CD8-positive, alpha-beta T cell (primary cell): ENCODE measurements at regions of chr1 and their contacts with region 1.

Region 1: GRCh38 chr1:36385410-36386257 is at the start of gene STK40:
- DNase-seq: peak; percentile 97 to 99 (median 98)
- ATAC-seq: peak; percentile 85
- H3K4me3 ChIP-seq: peak within 1 kb of the TSS; percentile 87 to 89
- H3K4me3 Mint-ChIP-seq: peak within 1 kb of the TSS; percentile 88
- H3K27ac ChIP-seq: peak within 1 kb of the TSS; percentile 78 to 92
- H3K27ac Mint-ChIP-seq: peak within 1 kb of the TSS; percentile 98
- H3K4me1 ChIP-seq: peaks cover 27% of the 10 kb centered on the region
- H3K4me1 Mint-ChIP-seq: peaks cover 46% of the 10 kb centered on the region
- H3K27me3 ChIP-seq: no peaks in the 10 kb centered on the region
- H3K27me3 Mint-ChIP-seq: no peaks in the 10 kb centered on the region
- CTCF ChIP-seq: no peak
- total RNA-seq, gene STK40: 13.4 to 16.9 TPM

Region 2: GRCh38 chr1:35930593-35931445 is 454.8 kb before region 1 on chr1 and contains the start of gene AGO3:
- CTCF ChIA-PET with region 1: no interaction called
- POLR2A ChIA-PET with region 1: no interaction called
- intact Hi-C with region 1: loop called in 1 of 2 experiments (anchors 5 kb)
- DNase-seq: peak; percentile 70 to 97 (median 84)
- ATAC-seq: peak; percentile 79
- H3K4me3 ChIP-seq: peak within 1 kb of the TSS; percentile 66 to 93
- H3K4me3 Mint-ChIP-seq: peak within 1 kb of the TSS; percentile 94
- H3K27ac ChIP-seq: peak within 1 kb of the TSS; percentile 96
- H3K27ac Mint-ChIP-seq: peak within 1 kb of the TSS; percentile 98
- H3K4me1 ChIP-seq: peaks cover 28% of the 10 kb centered on the region
- H3K4me1 Mint-ChIP-seq: peaks cover 35% of the 10 kb centered on the region
- H3K27me3 ChIP-seq: no peaks in the 10 kb centered on the region
- H3K27me3 Mint-ChIP-seq: no peaks in the 10 kb centered on the region
- CTCF ChIP-seq: no peak
- total RNA-seq, gene AGO3: 27.6 to 30.2 TPM

Region 3: GRCh38 chr1:36323597-36324352 is 61.9 kb before region 1 on chr1 and contains the start of gene EVA1B:
- CTCF ChIA-PET with region 1: no interaction called
- POLR2A ChIA-PET with region 1: interaction called, 3 read pairs
- intact Hi-C with region 1: loop called in 1 of 2 experiments (anchors 5 kb)
- DNase-seq: peak in 8 of 9 experiments; percentile 26 to 64 (median 48)
- ATAC-seq: peak; percentile 37
- H3K4me3 ChIP-seq: peak within 1 kb of the TSS; percentile 58 to 62
- H3K4me3 Mint-ChIP-seq: peak within 1 kb of the TSS; percentile 80
- H3K27ac ChIP-seq: no peak within 1 kb of the TSS
- H3K27ac Mint-ChIP-seq: peak within 1 kb of the TSS; percentile 55
- H3K4me1 ChIP-seq: peaks cover 25% of the 10 kb centered on the region
- H3K4me1 Mint-ChIP-seq: peaks cover 25% of the 10 kb centered on the region
- H3K27me3 ChIP-seq: no peaks in the 10 kb centered on the region
- H3K27me3 Mint-ChIP-seq: peaks cover 9% of the 10 kb centered on the region
- CTCF ChIP-seq: no peak
- total RNA-seq, gene EVA1B: 0.97 to 1.2 TPM

Region 4: GRCh38 chr1:36397378-36398230 is 12.0 kb after region 1 on chr1 and contains the start of gene LSM10:
- CTCF ChIA-PET with region 1: interaction called, 10 read pairs
- POLR2A ChIA-PET with region 1: interaction called, 36 read pairs
- intact Hi-C with region 1: loop called (anchors 1 kb)
- DNase-seq: peak; percentile 75 to 96 (median 90)
- ATAC-seq: peak; percentile 91
- H3K4me3 ChIP-seq: peak within 1 kb of the TSS; percentile 97 to 98
- H3K4me3 Mint-ChIP-seq: peak within 1 kb of the TSS; percentile 98
- H3K27ac ChIP-seq: peak within 1 kb of the TSS; percentile 85 to 93
- H3K27ac Mint-ChIP-seq: peak within 1 kb of the TSS; percentile 96
- H3K4me1 ChIP-seq: peaks cover 11% of the 10 kb centered on the region
- H3K4me1 Mint-ChIP-seq: peaks cover 31% of the 10 kb centered on the region
- H3K27me3 ChIP-seq: no peaks in the 10 kb centered on the region
- H3K27me3 Mint-ChIP-seq: no peaks in the 10 kb centered on the region
- CTCF ChIP-seq: no peak
- total RNA-seq, gene LSM10: 20.9 to 21.4 TPM

Region 5: DNA sequence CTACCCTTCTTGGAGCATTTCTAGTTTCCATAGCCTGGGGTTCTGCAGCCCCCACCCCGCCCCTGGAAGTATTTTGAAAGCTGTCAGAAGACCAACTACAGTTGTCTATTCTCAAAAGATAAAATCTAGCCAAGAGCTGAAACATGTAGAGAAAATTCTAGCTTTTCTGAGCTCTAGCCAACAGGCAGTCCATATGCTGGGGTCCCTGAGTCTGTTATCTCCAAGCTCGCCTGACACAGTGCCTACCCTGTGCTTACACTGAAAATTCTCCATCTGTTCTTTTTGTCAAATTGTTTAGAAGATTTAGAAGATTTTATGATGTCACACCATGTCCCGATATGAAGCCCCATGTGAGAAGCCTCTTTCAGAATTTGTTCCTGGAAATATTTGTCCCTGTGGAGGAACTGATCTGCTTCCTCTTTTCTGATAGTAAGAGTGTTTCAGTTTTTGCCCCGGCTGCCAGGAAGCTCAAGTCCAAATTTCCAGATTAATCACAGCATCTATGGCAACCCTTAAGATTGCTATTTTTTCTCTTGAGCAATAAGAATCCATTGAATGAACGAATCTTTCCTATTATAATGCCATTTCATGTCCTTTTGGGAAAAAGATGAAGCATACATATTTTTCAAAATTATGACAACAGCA is 120.8 kb after region 1 on chr1:
- CTCF ChIA-PET with region 1: no interaction called
- POLR2A ChIA-PET with region 1: no interaction called
- intact Hi-C with region 1: no loop called
- DNase-seq: no peak
- ATAC-seq: no peak
- H3K4me3 ChIP-seq: no peak overlapping the region
- H3K4me3 Mint-ChIP-seq: no peak overlapping the region
- H3K27ac ChIP-seq: no peak overlapping the region
- H3K27ac Mint-ChIP-seq: no peak overlapping the region
- H3K4me1 ChIP-seq: no peaks in the 10 kb centered on the region
- H3K4me1 Mint-ChIP-seq: no peaks in the 10 kb centered on the region
- H3K27me3 ChIP-seq: no peaks in the 10 kb centered on the region
- H3K27me3 Mint-ChIP-seq: peaks cover 23% of the 10 kb centered on the region
- CTCF ChIP-seq: no peak

Region 6: GRCh38 chr1:37479255-37480124 is 1093.9 kb after region 1 on chr1:
- CTCF ChIA-PET with region 1: no interaction called
- POLR2A ChIA-PET with region 1: no interaction called
- intact Hi-C with region 1: loop called in 1 of 2 experiments (anchors 5 kb)
- DNase-seq: peak; percentile 62 to 95 (median 91)
- ATAC-seq: peak; percentile 55
- H3K4me3 ChIP-seq: peak overlapping the region; percentile 93 to 95
- H3K4me3 Mint-ChIP-seq: peak overlapping the region; percentile 95
- H3K27ac ChIP-seq: peak overlapping the region; percentile 95 to 99
- H3K27ac Mint-ChIP-seq: peak overlapping the region; percentile 99
- H3K4me1 ChIP-seq: peaks cover 39% of the 10 kb centered on the region
- H3K4me1 Mint-ChIP-seq: peaks cover 42% of the 10 kb centered on the region
- H3K27me3 ChIP-seq: no peaks in the 10 kb centered on the region
- H3K27me3 Mint-ChIP-seq: no peaks in the 10 kb centered on the region
- CTCF ChIP-seq: no peak